Cardiac septum (tissue), 1 donor: ENCODE measurements at regions of chrX and their contacts with region 1.

Region 1: DNA sequence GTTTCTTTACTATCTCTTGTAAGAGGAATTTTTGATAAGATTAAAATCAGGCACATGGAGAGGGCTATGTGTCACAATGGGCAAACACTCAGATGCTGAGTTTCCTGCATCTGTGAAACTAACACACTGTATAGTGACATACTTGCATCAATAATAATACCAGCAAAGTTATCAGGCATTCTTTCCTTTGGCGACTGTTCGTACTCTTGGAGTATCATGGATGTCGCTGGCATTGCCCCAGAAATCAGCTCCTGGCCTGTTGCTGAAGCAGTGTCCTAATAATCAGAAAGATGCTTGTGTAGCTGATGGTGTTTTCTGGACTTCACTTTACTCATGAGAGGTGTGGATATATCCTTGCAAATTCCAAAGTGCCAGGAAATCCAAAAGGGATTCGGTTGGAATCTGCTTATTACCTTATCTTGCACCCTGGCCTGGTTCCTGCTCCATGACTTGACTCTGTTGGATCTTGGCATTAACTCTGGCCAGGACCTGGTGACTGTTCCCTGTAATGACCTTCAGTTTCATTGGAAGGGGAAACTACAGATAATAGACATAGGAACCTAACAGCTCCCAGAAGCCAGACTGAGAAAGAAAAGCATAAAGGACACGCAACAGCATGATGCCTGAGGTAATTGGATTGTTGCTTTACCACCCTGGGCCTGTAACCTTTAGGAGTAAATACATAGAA is 762.5 kb upstream of the GRIA3 start:
- DNase-seq: no peak

Region 2: DNA sequence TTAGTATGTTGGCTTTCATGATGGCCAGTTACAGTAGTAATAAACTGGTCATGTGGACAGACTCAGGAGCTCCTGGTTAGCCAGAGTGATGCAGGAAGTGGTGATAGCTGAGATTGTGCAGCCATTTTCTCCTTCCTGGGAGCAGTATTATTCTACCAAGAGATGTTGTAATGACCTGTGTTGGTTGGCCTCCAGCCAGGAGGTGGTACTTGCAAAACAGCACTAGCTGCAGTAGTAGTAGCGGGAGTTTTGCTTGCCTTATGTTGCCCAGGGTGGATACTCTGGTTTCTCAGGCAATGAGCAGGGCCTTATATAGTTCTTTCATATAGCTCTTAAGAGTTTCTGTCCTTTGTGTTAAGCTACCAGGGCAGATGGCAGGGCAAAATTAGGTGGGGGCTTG is 375.4 kb before region 1 on chrX:
- intact Hi-C with region 1: no loop called
- DNase-seq: no peak

Region 3: GRCh38 chrX:122475306-122475705 is 53.7 kb after region 1 on chrX:
- intact Hi-C with region 1: loop called (anchors 2 kb)
- DNase-seq: no peak